Activated B cell treated with CpG ODN at 0.5 μM for 24 hours (primary cell): ENCODE measurements at regions of chr5 and their contacts with region 1.

Region 1: DNA sequence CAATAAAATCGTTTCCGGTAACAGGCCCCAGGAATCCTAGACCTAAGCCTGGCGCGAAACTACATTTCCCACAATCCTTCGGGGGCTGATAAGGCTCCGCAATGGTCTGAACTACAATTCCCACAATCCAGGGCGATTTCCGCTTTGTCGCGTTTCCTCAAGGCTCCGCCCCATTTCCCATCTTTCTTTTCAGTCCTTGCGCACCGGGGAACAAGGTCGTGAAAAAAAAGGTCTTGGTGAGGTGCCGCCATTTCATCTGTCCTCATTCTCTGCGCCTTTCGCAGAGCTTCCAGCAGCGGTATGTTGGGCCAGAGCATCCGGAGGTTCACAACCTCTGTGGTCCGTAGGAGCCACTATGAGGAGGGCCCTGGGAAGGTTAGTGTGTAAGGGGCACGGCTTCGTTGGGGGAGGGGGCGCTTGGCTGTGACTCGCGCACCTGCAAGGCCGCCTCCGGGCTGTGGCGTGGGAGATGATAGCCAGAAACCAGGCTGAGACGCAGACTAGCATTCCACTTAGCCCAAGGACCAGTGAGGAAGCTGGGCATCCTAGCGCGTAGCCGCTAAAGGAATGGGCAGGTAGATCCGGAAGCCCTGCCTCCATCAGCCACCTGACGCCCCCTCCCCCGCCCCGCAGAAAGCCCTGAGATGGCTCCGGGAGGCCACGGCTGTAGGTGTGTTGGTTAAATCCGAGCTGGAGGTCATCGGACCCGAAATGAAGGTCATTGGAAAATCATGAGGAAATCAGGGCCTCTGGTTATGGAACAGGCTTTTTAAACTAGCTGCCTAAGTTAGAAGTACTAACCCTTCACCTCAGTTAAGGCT is at the start of gene COX7C:
- DNase-seq: peak; percentile 77
- ATAC-seq: peak; percentile 96
- H3K4me3 Mint-ChIP-seq: peak within 1 kb of the TSS; percentile 100
- H3K27ac Mint-ChIP-seq: peak within 1 kb of the TSS; percentile 99
- H3K4me1 Mint-ChIP-seq: peaks cover 28% of the 10 kb centered on the region
- H3K27me3 Mint-ChIP-seq: peaks cover 7% of the 10 kb centered on the region
- CTCF ChIP-seq: no peak
- total RNA-seq, gene COX7C: 486 and 584 TPM in 2 replicates

Region 2: DNA sequence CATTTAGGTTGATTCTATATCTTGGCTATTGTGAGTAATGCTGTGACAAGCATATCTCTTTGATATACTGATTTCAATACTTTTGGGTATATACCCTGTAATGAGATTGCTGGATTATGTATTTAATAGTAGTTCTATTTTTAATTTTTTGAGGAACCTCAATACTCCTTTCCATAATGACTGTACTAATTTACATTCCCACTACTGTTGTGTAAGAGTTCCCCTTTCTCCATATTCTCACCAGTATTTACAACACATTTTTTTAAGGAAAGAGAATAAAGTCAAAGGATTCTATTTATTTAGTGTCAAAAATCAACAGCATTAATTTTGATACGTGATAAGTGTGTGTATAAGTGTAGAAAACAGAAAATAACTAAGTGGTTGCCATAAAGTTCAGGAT is 1876.9 kb before region 1 on chr5:
- CTCF ChIA-PET with region 1: no interaction called
- POLR2A ChIA-PET with region 1: no interaction called
- intact Hi-C with region 1: no loop called
- DNase-seq: no peak
- ATAC-seq: no peak
- H3K4me3 Mint-ChIP-seq: no peak overlapping the region
- H3K27ac Mint-ChIP-seq: no peak overlapping the region
- H3K4me1 Mint-ChIP-seq: no peaks in the 10 kb centered on the region
- H3K27me3 Mint-ChIP-seq: no peaks in the 10 kb centered on the region
- CTCF ChIP-seq: no peak

Region 3: GRCh38 chr5:86427158-86427557 is 190.8 kb before region 1 on chr5:
- CTCF ChIA-PET with region 1: no interaction called
- POLR2A ChIA-PET with region 1: no interaction called
- intact Hi-C with region 1: no loop called
- DNase-seq: no peak
- ATAC-seq: no peak
- H3K4me3 Mint-ChIP-seq: no peak overlapping the region
- H3K27ac Mint-ChIP-seq: no peak overlapping the region
- H3K4me1 Mint-ChIP-seq: no peaks in the 10 kb centered on the region
- H3K27me3 Mint-ChIP-seq: no peaks in the 10 kb centered on the region
- CTCF ChIP-seq: no peak

Region 4: DNA sequence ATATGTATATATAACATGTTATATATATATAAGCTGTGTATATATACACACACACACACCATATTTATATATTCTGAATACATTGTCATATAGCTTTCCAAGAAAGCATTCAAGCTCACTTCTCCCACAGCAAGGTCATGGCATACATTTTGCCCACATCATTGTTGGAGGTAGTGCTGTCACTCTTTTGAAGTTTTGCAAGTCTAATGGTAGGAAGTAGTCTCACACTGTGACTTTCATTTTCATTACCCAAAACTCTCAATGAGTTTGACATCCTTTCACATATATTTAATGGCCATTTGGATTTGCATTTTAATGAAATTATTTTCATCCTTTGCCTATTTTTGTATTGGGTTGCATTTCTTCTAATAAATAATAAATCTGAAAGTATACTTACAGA is 60.0 kb before region 1 on chr5:
- CTCF ChIA-PET with region 1: no interaction called
- POLR2A ChIA-PET with region 1: no interaction called
- intact Hi-C with region 1: no loop called
- DNase-seq: no peak
- ATAC-seq: no peak
- H3K4me3 Mint-ChIP-seq: no peak overlapping the region
- H3K27ac Mint-ChIP-seq: no peak overlapping the region
- H3K4me1 Mint-ChIP-seq: no peaks in the 10 kb centered on the region
- H3K27me3 Mint-ChIP-seq: no peaks in the 10 kb centered on the region
- CTCF ChIP-seq: no peak

Region 5: GRCh38 chr5:87103596-87104287 is 485.8 kb after region 1 on chr5:
- CTCF ChIA-PET with region 1: no interaction called
- POLR2A ChIA-PET with region 1: no interaction called
- intact Hi-C with region 1: loop called (anchors 10 kb)
- DNase-seq: no peak
- ATAC-seq: peak; percentile 99
- H3K4me3 Mint-ChIP-seq: peak overlapping the region; percentile 80
- H3K27ac Mint-ChIP-seq: peak overlapping the region; percentile 89
- H3K4me1 Mint-ChIP-seq: peaks cover 46% of the 10 kb centered on the region
- H3K27me3 Mint-ChIP-seq: no peaks in the 10 kb centered on the region
- CTCF ChIP-seq: no peak

Region 6: GRCh38 chr5:88268385-88269184 is 1650.6 kb after region 1 on chr5 and contains the start of gene TMEM161B:
- CTCF ChIA-PET with region 1: no interaction called
- POLR2A ChIA-PET with region 1: no interaction called
- intact Hi-C with region 1: loop called (anchors 1 kb)
- DNase-seq: peak; percentile 83
- ATAC-seq: peak; percentile 99
- H3K4me3 Mint-ChIP-seq: peak within 1 kb of the TSS; percentile 100
- H3K27ac Mint-ChIP-seq: peak within 1 kb of the TSS; percentile 96
- H3K4me1 Mint-ChIP-seq: peaks cover 48% of the 10 kb centered on the region
- H3K27me3 Mint-ChIP-seq: no peaks in the 10 kb centered on the region
- CTCF ChIP-seq: no peak
- total RNA-seq, gene TMEM161B: 26.4 and 31.1 TPM in 2 replicates